Heart left ventricle (tissue), 16 donors: ENCODE measurements at regions of chr11 and their contacts with region 1.

Region 1: DNA sequence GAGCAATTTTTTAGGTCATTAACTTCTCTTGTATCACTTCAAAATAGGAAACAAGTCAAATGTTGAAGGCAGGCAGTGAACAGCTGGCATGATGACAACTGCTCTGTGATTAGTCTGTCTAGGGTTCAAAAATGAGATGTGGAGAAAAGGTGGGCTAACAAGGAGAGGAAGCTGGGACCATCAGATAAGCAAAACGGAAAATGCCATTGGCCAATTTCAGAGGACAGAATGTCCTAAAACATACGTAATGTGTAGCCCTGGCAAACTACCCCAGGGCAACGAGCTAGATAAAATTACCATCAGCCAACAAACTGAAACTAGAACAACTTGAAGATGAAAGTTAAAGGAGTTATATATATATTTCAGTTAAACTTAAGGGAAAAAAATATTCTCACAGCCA is 93.2 kb downstream of the RELT start:
- DNase-seq: no peak
- ATAC-seq: peak; percentile 15 to 67 (median 43)
- H3K4me3 ChIP-seq: peak overlapping the region in 1 of 12 donors; percentile 6
- H3K27ac ChIP-seq: peak overlapping the region in 10 of 12 donors; percentile 3 to 64 (median 49)
- H3K4me1 ChIP-seq: peaks cover 0 to 61% (median 37%) of the 10 kb centered on the region in 12 donors
- H3K27me3 ChIP-seq: no peaks in the 10 kb centered on the region
- CTCF ChIP-seq: no peak
- POLR2A ChIP-seq: no peak

Region 2: GRCh38 chr11:73429121-73429750 is 40.2 kb before region 1 on chr11:
- intact Hi-C with region 1: loop called in 1 of 10 experiments (anchors 5 kb)
- DNase-seq: no peak
- ATAC-seq: no peak
- H3K4me3 ChIP-seq: no peak overlapping the region
- H3K27ac ChIP-seq: no peak overlapping the region
- H3K4me1 ChIP-seq: peaks cover 0 to 31% (median 12%) of the 10 kb centered on the region in 12 donors
- H3K27me3 ChIP-seq: no peaks in the 10 kb centered on the region
- CTCF ChIP-seq: no peak
- POLR2A ChIP-seq: no peak

Region 3: GRCh38 chr11:73439002-73439843 is 30.2 kb before region 1 on chr11:
- intact Hi-C with region 1: loop called in 1 of 10 experiments (anchors 5 kb)
- DNase-seq: no peak
- ATAC-seq: peak; percentile 12 to 54 (median 46)
- H3K4me3 ChIP-seq: no peak overlapping the region
- H3K27ac ChIP-seq: peak overlapping the region in 5 of 12 donors; percentile 7 to 61 (median 21)
- H3K4me1 ChIP-seq: peaks cover 0 to 33% (median 19%) of the 10 kb centered on the region in 12 donors
- H3K27me3 ChIP-seq: no peaks in the 10 kb centered on the region
- CTCF ChIP-seq: no peak
- POLR2A ChIP-seq: no peak

Region 4: GRCh38 chr11:73453562-73453961 is 15.8 kb before region 1 on chr11:
- intact Hi-C with region 1: loop called in 1 of 10 experiments (anchors 1 kb)
- DNase-seq: no peak
- ATAC-seq: no peak
- H3K4me3 ChIP-seq: no peak overlapping the region
- H3K27ac ChIP-seq: no peak overlapping the region
- H3K4me1 ChIP-seq: peaks cover 0 to 29% (median 0%) of the 10 kb centered on the region in 12 donors
- H3K27me3 ChIP-seq: no peaks in the 10 kb centered on the region
- CTCF ChIP-seq: no peak
- POLR2A ChIP-seq: no peak

Region 5: GRCh38 chr11:73530109-73530508 is 60.7 kb after region 1 on chr11:
- intact Hi-C with region 1: no loop called
- DNase-seq: no peak
- ATAC-seq: no peak
- H3K4me3 ChIP-seq: no peak overlapping the region
- H3K27ac ChIP-seq: no peak overlapping the region
- H3K4me1 ChIP-seq: peaks cover 0 to 53% (median 25%) of the 10 kb centered on the region in 12 donors
- H3K27me3 ChIP-seq: no peaks in the 10 kb centered on the region
- CTCF ChIP-seq: peak in 2 of 12 donors; percentile 14 to 20
- POLR2A ChIP-seq: no peak

Region 6: GRCh38 chr11:73597956-73598718 is 128.7 kb after region 1 on chr11 and contains the start of gene FAM168A:
- intact Hi-C with region 1: loop called in 3 of 10 experiments (anchors 5 to 10 kb)
- DNase-seq: peak; percentile 97 to 98 (median 98)
- ATAC-seq: peak; percentile 97 to 99 (median 98)
- H3K4me3 ChIP-seq: peak within 1 kb of the TSS; percentile 75 to 97 (median 90)
- H3K27ac ChIP-seq: peak within 1 kb of the TSS; percentile 69 to 92 (median 86)
- H3K4me1 ChIP-seq: peaks cover 0 to 28% (median 15%) of the 10 kb centered on the region in 12 donors
- H3K27me3 ChIP-seq: no peaks in the 10 kb centered on the region
- CTCF ChIP-seq: peak in 8 of 12 donors; percentile 14 to 44 (median 25)
- POLR2A ChIP-seq: peak in 1 of 2 donors; percentile 75
- total RNA-seq, gene FAM168A: 21.1 to 39.1 (median 31.2) TPM